AG04450 (cell line): ENCODE measurements at regions of chr5 and their contacts with region 1.

Region 1: GRCh38 chr5:31809050-31809870 is 170.3 kb downstream of the PDZD2 start:
- DNase-seq: peak; percentile 32
- H3K4me3 ChIP-seq: no peak overlapping the region
- H3K27ac ChIP-seq: no peak overlapping the region
- H3K27me3 ChIP-seq: peaks cover 5% of the 10 kb centered on the region
- CTCF ChIP-seq: peak; percentile 76

Region 2: DNA sequence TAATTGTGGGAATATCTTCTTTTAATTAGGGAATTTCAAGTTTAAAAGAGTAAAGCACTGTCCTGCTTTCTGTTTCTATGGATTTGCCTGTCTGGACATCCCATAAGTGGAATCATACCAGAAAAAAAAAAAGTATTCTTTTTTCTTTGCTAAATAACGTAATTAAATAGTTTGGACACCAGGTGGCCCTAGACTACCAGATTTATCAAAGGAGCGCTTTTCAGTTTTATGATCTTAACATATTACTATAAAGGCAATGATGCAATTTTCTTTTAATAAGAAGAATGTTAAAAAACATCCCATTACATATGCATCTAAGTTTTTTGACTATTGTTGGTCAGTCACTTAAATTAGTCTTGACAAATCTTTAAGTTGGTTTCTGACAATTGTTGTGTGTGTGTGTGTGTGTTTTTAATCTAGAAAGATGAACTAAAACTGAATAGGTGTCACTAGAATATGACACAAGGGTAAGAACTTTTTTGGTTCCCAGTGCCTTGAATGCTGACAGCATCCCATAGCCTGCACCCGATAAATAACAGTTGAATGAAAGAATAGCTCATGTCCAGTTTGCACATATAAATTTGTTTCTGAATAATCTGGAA is 227.7 kb before region 1 on chr5:
- CTCF ChIA-PET with region 1: interaction called, 38 read pairs
- POLR2A ChIA-PET with region 1: no interaction called
- DNase-seq: no peak
- H3K4me3 ChIP-seq: no peak overlapping the region
- H3K27ac ChIP-seq: no peak overlapping the region
- H3K27me3 ChIP-seq: peaks cover 10% of the 10 kb centered on the region
- CTCF ChIP-seq: peak; percentile 50

Region 3: GRCh38 chr5:31767335-31768031 is 41.8 kb before region 1 on chr5:
- CTCF ChIA-PET with region 1: no interaction called
- POLR2A ChIA-PET with region 1: no interaction called
- DNase-seq: no peak
- H3K4me3 ChIP-seq: no peak overlapping the region
- H3K27ac ChIP-seq: no peak overlapping the region
- H3K27me3 ChIP-seq: no peaks in the 10 kb centered on the region
- CTCF ChIP-seq: no peak